ENCODE measurements at regions of chr14 and their contacts with region 1.

Region 1: GRCh38 chr14:24431569-24432258 is 2.0 kb downstream of the KHNYN start:
- DNase-seq: peak; percentile 90 to 95 (median 92)
- H3K4me3 ChIP-seq: no peak overlapping the region
- H3K27ac ChIP-seq: peak overlapping the region in 1 of 2 donors; percentile 99
- H3K4me1 ChIP-seq: peaks cover 11% of the 10 kb centered on the region
- H3K27me3 ChIP-seq: no peaks in the 10 kb centered on the region
- CTCF ChIP-seq: peak; percentile 81 to 91 (median 88)
- EP300 ChIP-seq: no peak
- POLR2A ChIP-seq: no peak

Region 2: GRCh38 chr14:24114536-24115450 is 316.9 kb before region 1 on chr14 and contains the starts of genes DCAF11 and NRL:
- intact Hi-C with region 1: no loop called
- DNase-seq: peak; percentile 98 to 99 (median 99)
- H3K4me3 ChIP-seq: peak within 1 kb of the TSS; percentile 84
- H3K27ac ChIP-seq: peak within 1 kb of the TSS; percentile 97 to 100
- H3K4me1 ChIP-seq: peaks cover 6% of the 10 kb centered on the region
- H3K27me3 ChIP-seq: no peaks in the 10 kb centered on the region
- CTCF ChIP-seq: no peak
- EP300 ChIP-seq: peak; percentile 98
- POLR2A ChIP-seq: peak; percentile 74
- total RNA-seq, gene DCAF11: 34.7 to 71.4 (median 51.5) TPM
- total RNA-seq, gene NRL: 1.0 to 4.1 (median 2.8) TPM

Region 3: GRCh38 chr14:24332268-24332993 is 99.3 kb before region 1 on chr14:
- intact Hi-C with region 1: loop called (anchors 2 to 5 kb)
- DNase-seq: peak; percentile 50 to 69 (median 66)
- H3K4me3 ChIP-seq: peak overlapping the region; percentile 20
- H3K27ac ChIP-seq: no peak overlapping the region
- H3K4me1 ChIP-seq: peaks cover 5% of the 10 kb centered on the region
- H3K27me3 ChIP-seq: no peaks in the 10 kb centered on the region
- CTCF ChIP-seq: peak; percentile 28 to 65 (median 63)
- EP300 ChIP-seq: no peak
- POLR2A ChIP-seq: no peak

Region 4: GRCh38 chr14:24403294-24403998 is 28.3 kb before region 1 on chr14:
- intact Hi-C with region 1: loop called in 2 of 4 experiments (anchors 2 to 5 kb)
- DNase-seq: peak; percentile 63 to 76 (median 69)
- H3K4me3 ChIP-seq: no peak overlapping the region
- H3K27ac ChIP-seq: peak overlapping the region in 1 of 2 donors; percentile 37
- H3K4me1 ChIP-seq: peaks cover 23% of the 10 kb centered on the region
- H3K27me3 ChIP-seq: no peaks in the 10 kb centered on the region
- CTCF ChIP-seq: no peak
- EP300 ChIP-seq: no peak
- POLR2A ChIP-seq: no peak

Region 5: DNA sequence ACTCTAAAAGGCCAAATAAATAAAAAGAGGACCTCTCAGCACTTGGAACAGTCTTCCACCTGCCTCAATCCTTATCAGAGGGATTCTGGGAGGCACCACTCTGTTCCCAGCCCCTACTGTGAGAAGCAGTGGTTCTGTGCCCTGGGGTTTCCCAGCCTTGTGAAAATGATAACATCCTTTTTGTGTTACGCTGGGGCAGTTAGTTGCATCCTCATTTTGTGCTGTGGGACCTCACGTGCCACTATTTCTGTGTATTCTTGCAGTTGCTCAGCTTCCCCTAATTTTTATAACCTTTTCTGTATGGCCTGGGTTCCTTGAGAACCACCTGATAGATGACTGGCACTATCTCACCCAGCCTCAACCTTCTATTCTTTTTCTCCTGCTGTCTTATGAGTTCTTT is 87.1 kb after region 1 on chr14:
- intact Hi-C with region 1: no loop called
- DNase-seq: no peak
- H3K4me3 ChIP-seq: no peak overlapping the region
- H3K27ac ChIP-seq: no peak overlapping the region
- H3K4me1 ChIP-seq: no peaks in the 10 kb centered on the region
- H3K27me3 ChIP-seq: no peaks in the 10 kb centered on the region
- CTCF ChIP-seq: no peak
- EP300 ChIP-seq: no peak
- POLR2A ChIP-seq: no peak

Measured in ovary (tissue), 10 donors.